ENCODE measurements at regions of chr17 and their contacts with region 1.

Region 1: DNA sequence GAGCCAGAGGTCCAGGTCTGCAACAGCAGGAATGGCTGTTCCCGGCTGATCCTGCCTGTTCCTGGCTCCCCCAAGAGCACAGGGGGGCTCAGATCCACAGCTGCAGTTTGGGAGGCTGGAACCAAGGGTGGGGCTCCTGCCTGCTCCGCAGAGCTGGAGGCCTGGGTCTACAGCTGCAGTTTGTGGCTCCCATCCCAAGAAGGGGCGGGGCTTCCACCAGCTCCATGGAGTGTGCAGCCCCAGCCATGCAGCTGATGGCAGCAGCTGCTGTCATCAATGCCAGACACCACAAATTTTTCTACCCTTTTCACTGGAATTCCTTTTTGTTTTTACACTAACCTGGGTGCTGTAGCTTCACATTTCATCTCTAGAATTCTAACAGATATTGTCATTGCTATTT is 135.4 kb upstream of the KIF2B start:
- DNase-seq: no peak

Region 2: GRCh38 chr17:53619025-53619424 is 68.3 kb before region 1 on chr17:
- intact Hi-C with region 1: loop called in 1 of 2 experiments (anchors 2 kb)
- DNase-seq: no peak

Region 3: GRCh38 chr17:53655591-53655990 is 31.7 kb before region 1 on chr17:
- intact Hi-C with region 1: no loop called
- DNase-seq: no peak

Region 4: DNA sequence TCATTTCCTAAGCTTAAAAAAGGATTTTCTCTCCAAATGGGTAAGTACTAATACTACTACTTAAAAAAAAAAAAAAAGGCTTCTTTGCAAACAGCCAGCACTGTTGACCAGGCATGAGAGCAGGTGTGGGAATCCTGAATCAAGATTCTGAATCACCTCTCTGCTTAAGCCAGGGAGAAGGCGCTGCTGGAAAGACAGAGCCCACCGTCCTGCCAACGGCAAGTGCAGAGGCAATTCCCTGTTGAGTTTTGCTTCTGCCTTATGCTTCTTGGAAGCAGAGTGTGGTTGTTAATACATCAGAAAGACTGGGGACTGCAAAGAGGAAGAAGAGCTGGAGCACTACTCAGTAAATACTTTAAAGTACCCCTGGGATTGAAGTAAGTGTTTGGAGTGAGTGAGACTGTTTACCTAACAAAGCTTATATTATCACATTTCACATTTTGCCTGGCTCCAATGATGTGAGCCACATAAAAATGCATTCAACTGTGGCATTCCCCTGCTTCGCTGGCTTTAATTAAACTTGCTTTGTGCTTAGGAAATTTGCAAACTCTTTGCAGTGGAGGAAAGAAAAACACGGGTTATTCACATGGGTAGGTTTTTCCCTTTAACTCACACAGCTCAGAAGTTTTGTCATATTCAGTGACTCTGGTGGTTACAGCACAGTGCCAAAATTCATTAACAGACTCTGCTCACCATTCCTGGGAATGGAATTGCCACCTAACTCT is 49.4 kb after region 1 on chr17:
- intact Hi-C with region 1: no loop called
- DNase-seq: no peak

Measured in posterior vena cava (tissue), 2 donors.